ENCODE measurements at regions of chr11 and their contacts with region 1.

Region 1: DNA sequence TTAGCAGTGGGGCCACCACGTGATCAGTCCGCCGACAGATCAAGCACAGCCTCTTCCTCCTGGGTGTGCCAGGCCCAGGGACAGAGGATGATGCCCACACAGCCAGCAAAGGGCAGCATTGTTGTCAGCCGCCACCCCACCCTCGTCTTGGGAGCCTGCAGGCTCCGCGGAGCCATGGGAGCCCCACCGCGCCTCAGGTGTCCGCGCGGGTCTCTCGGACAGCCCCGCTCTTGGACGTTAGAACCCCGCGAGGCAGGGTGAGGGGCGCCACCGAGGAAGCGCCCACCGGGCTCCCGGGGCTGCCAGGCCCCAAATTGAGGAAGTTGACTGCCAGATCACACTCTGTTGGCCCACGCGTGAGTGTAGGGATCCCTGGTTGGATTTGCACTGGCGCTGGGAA is 83.9 kb upstream of the MS4A8 start:
- DNase-seq: no peak
- H3K4me3 ChIP-seq: no peak overlapping the region
- H3K27ac ChIP-seq: no peak overlapping the region
- H3K4me1 ChIP-seq: no peaks in the 10 kb centered on the region
- H3K27me3 ChIP-seq: no peaks in the 10 kb centered on the region
- CTCF ChIP-seq: no peak

Region 2: GRCh38 chr11:60334005-60334620 is 281.4 kb before region 1 on chr11:
- CTCF ChIA-PET with region 1: no interaction called
- dilution Hi-C with region 1: no loop called
- in situ Hi-C with region 1: no loop called
- intact Hi-C with region 1: loop called (anchors 1 kb)
- DNase-seq: peak; percentile 58
- H3K4me3 ChIP-seq: no peak overlapping the region
- H3K27ac ChIP-seq: no peak overlapping the region
- H3K4me1 ChIP-seq: no peaks in the 10 kb centered on the region
- H3K27me3 ChIP-seq: peaks cover 2% of the 10 kb centered on the region
- CTCF ChIP-seq: peak; percentile 65 to 80

Region 3: DNA sequence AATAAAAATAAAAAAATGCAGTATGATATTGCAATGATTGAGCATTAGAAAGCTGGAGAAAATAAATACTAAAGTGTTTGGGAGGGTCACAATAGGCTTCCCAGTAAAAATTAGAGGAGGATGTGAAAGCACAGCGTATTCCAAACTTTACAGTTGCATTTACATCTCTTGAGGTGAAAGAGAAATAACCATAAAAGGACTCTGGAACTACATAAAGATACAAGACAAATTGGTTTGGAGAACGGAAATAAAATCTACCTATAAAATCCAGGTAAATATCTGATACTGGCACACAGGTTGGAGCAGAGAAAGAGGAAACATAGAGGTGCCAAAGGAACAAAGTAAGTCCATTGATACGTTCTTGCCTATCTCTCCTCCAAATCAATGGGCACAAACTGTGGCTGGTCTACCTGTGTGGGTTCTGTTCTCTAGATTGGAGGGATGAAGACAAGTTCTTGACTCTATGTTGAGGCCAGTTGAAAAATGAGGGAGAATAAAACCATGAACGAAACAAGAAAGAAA is 122.9 kb before region 1 on chr11 and contains the start of gene MS4A12:
- CTCF ChIA-PET with region 1: no interaction called
- dilution Hi-C with region 1: no loop called
- in situ Hi-C with region 1: no loop called
- intact Hi-C with region 1: no loop called
- DNase-seq: no peak
- H3K4me3 ChIP-seq: no peak within 1 kb of the TSS
- H3K27ac ChIP-seq: no peak within 1 kb of the TSS
- H3K4me1 ChIP-seq: no peaks in the 10 kb centered on the region
- H3K27me3 ChIP-seq: no peaks in the 10 kb centered on the region
- CTCF ChIP-seq: no peak
- total RNA-seq, gene MS4A12: not detected

Measured in mammary epithelial cell (primary cell).